Activated T-helper 1 cell treated with anti-CD3 and anti-CD28 coated beads, Interleukin-12 subunit alpha, Interleukin-12 subunit beta, Interleukin-2, Interleukin-4 antibody, amounts not matched to agents 30 ng/mL and 10 ng/mL and 1 ng/mL, durations not matched to agents 14 hours and 24 hours and 36 hours (primary cell): ENCODE measurements at regions of chr4 and their contacts with region 1.

Region 1: DNA sequence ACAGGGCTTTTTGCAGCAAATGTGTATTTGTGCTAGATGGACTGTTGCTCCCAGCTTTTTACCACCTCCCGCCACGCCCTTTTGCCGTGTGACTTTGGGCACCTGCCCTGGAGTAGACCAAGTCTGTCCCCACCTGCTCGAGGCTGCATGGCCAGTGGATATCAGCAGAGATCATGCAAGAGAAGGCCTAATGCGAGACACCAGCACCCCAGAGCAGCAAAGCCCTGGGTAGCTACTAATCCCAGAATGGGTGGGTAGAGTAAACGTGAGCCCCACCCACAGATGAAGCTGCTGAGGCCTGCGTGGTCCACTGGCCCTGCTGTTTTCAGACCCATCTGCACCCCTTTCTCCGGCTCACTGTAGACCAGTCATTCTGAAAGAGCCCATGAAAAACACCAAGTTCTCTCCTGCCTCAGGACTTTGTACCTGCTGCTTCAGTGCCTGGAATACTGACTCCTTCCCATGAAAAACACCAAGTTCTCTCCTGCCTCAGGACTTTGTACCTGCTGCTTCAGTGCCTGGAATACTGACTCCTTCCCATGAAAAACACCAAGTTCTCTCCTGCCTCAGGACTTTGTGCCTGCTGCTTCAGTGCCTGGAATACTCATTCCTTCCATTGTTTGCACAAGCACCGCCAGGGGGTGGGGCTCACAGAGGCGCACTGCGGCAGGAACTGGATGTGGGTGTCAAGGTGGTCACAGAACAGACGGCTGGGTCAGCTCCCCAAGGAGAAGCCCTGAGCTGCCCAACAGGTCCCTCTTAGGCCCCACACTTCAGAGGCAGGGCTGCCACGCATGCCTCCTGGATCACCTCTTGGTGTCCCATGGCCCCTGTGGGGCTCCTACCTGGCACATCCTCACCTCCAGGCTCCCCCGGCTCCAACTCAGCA is 5.1 kb upstream of the TNIP2 start:
- DNase-seq: no peak
- H3K4me3 Mint-ChIP-seq: no peak overlapping the region
- H3K27ac Mint-ChIP-seq: no peak overlapping the region
- H3K4me1 Mint-ChIP-seq: peaks cover 13% of the 10 kb centered on the region
- H3K27me3 Mint-ChIP-seq: no peaks in the 10 kb centered on the region

Region 2: DNA sequence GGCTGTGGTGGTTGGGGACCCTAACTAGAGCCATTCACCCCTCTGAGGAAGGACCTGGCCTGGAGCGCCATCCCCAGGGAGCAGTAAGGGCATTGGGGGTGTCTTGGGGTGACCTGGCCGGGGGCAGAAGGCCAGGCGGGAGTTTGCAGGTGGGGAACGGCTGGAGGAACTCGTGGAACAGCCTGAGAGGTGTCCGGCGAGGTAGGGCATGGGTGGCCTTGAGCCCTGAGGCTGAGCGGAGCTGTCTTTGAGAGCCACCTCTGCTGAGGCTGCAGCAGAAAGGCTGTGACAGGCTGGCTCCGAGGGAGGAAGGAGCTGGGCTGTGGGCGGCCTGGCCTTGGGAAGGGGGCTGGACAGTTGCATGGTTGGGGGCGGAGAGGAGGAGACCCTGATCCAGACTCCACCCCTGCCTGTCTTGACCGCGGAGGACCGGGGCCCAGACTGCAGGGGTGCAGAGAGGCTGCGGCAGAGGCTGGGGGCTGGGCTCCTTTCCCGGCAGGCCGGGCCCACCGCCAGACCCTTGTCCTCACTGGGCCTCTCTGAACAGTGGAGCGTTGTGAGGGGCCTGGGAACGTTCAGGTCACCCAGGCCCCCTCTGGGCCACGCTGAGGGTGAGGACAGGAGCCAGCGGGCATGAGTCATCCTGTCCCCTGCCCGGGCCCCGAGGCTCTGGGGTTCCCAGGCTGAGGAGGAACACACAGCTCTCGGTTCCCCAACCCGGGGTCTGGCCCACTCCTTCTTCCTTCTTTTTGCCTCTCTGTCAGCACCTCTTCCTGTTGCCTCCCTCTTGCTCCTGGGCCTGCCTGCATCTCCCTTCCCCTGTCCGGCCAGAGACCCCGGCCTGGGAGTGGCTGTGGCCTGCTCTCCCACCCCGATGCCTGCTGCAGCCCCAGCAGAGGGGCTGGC is 39.7 kb after region 1 on chr4:
- intact Hi-C with region 1: loop called (anchors 1 kb)
- DNase-seq: no peak
- H3K4me3 Mint-ChIP-seq: peak overlapping the region; percentile 78
- H3K27ac Mint-ChIP-seq: peak overlapping the region; percentile 48
- H3K4me1 Mint-ChIP-seq: peaks cover 36% of the 10 kb centered on the region
- H3K27me3 Mint-ChIP-seq: no peaks in the 10 kb centered on the region

Region 3: GRCh38 chr4:2837904-2838496 is 76.7 kb after region 1 on chr4:
- intact Hi-C with region 1: loop called (anchors 1 kb)
- DNase-seq: peak; percentile 65
- H3K4me3 Mint-ChIP-seq: peak overlapping the region; percentile 78
- H3K27ac Mint-ChIP-seq: peak overlapping the region; percentile 84
- H3K4me1 Mint-ChIP-seq: peaks cover 42% of the 10 kb centered on the region
- H3K27me3 Mint-ChIP-seq: no peaks in the 10 kb centered on the region

Region 4: GRCh38 chr4:2934813-2935761 is 173.8 kb after region 1 on chr4:
- intact Hi-C with region 1: loop called (anchors 1 kb)
- DNase-seq: peak; percentile 95
- H3K4me3 Mint-ChIP-seq: peak overlapping the region; percentile 94
- H3K27ac Mint-ChIP-seq: peak overlapping the region; percentile 87
- H3K4me1 Mint-ChIP-seq: peaks cover 49% of the 10 kb centered on the region
- H3K27me3 Mint-ChIP-seq: no peaks in the 10 kb centered on the region

Region 5: DNA sequence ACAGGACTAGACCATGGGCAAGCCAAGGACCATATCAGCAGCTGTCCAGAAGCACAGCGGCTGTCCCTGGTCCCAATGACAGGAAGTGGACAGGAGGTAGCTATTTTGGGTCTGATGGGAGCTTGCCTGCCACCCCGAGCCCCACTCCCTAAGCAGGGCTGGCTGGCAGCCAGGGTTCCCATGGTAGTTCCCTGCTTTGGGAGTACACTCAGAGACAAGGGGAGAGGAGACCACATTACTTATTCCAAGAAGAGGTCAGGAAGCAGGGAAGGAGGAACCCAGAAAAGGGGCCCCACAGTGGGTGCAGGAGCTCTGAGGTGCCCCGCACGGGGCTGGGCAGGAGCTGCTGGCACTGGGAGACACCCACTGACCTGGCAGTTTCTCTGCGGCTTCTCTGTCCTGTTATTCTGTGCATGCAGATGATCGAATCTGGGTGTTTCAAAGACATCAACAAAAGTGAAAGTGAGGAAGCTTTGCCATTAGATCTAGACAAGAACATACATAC is 276.7 kb after region 1 on chr4:
- intact Hi-C with region 1: loop called (anchors 1 kb)
- DNase-seq: peak; percentile 6
- H3K4me3 Mint-ChIP-seq: peak overlapping the region; percentile 57
- H3K27ac Mint-ChIP-seq: peak overlapping the region; percentile 18
- H3K4me1 Mint-ChIP-seq: peaks cover 34% of the 10 kb centered on the region
- H3K27me3 Mint-ChIP-seq: peaks cover 28% of the 10 kb centered on the region